ENCODE measurements at regions of chr12 and their contacts with region 1.

Region 1: DNA sequence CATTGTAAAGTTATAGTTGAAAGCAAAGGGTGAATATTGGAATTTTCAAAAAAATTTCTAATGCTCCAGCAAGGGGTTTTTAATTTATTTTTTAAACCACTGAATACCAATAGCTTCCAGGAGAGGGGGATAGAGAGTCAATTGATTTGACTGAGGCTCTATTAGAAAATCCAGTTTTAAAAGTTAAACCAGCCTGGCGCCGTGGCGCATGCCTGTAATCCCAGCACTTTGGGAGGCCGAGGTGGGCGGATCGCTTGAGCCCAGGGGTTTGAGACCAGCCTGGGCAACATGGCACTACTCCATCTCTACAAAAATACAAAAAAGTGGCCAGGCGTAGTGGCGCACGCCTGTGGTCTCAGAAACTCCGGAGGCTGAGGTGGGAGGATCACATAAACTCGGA is 150.1 kb downstream of the SLC38A4 start:
- DNase-seq: peak; percentile 53
- ATAC-seq: peak; percentile 31

Region 2: GRCh38 chr12:46933947-46934346 is 258.2 kb after region 1 on chr12:
- intact Hi-C with region 1: loop called (anchors 5 kb)
- DNase-seq: no peak
- ATAC-seq: peak; percentile 87

Region 3: DNA sequence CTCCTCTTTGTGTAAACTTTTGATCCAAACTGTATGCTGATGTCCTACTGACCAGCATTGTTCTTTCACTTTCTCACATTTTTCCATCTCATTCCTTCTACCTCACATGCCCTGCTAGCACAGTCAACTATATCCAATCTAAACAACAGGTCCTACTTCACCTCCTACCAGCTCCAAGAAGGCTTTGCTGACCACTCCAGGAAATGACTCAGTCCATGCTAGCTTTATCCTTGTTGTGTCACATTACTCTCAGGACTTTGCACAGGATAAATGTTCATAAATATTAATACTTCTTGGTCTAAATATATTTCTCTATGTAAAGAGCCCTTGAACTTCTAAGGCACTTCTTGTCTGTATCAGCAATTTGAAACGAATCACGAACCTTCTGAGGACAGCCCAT is 338.7 kb after region 1 on chr12:
- intact Hi-C with region 1: loop called (anchors 10 kb)
- DNase-seq: no peak
- ATAC-seq: no peak

Measured in Right ventricle myocardium superior (tissue), 1 donor.